Mammary epithelial cell (primary cell): ENCODE measurements at regions of chr3 and their contacts with region 1.

Region 1: GRCh38 chr3:56997675-56998074 is 62.8 kb upstream of the SPATA12 start:
- DNase-seq: no peak
- H3K4me3 ChIP-seq: no peak overlapping the region
- H3K27ac ChIP-seq: no peak overlapping the region
- H3K4me1 ChIP-seq: no peaks in the 10 kb centered on the region
- H3K27me3 ChIP-seq: no peaks in the 10 kb centered on the region
- CTCF ChIP-seq: no peak

Region 2: GRCh38 chr3:56693750-56694149 is 303.9 kb before region 1 on chr3:
- CTCF ChIA-PET with region 1: no interaction called
- dilution Hi-C with region 1: loop called (anchors 10 kb)
- in situ Hi-C with region 1: no loop called
- intact Hi-C with region 1: no loop called
- DNase-seq: no peak
- H3K4me3 ChIP-seq: no peak overlapping the region
- H3K27ac ChIP-seq: no peak overlapping the region
- H3K4me1 ChIP-seq: peaks cover 6% of the 10 kb centered on the region
- H3K27me3 ChIP-seq: no peaks in the 10 kb centered on the region
- CTCF ChIP-seq: no peak

Region 3: DNA sequence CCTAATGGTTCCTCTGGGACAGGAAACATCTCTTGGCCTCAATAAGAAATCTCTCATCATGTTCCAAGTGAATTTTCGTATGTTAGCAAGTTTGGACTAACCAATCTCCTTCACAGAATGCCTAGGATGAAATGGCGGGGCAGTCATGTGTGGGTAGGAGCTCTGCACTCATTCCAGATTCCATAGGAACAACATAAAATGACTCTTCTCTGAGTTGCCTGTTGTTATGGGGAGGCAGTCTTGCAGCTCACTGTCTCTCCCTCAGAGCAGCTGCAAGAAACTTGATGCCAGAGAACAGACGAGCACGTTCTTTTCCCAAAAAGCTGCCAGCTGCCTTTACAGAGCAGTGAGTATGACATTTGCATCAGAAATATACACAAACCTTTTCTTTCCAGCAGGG is 96.9 kb after region 1 on chr3:
- CTCF ChIA-PET with region 1: interaction called, 5 read pairs
- dilution Hi-C with region 1: loop called (anchors 10 kb)
- in situ Hi-C with region 1: loop called in 1 of 2 experiments (anchors 10 kb)
- intact Hi-C with region 1: loop called (anchors 1 kb)
- DNase-seq: no peak
- H3K4me3 ChIP-seq: no peak overlapping the region
- H3K27ac ChIP-seq: no peak overlapping the region
- H3K4me1 ChIP-seq: peaks cover 15% of the 10 kb centered on the region
- H3K27me3 ChIP-seq: no peaks in the 10 kb centered on the region
- CTCF ChIP-seq: no peak

Region 4: GRCh38 chr3:57164657-57165573 is 167.2 kb after region 1 on chr3 and contains the start of gene IL17RD:
- CTCF ChIA-PET with region 1: no interaction called
- dilution Hi-C with region 1: no loop called
- in situ Hi-C with region 1: no loop called
- intact Hi-C with region 1: loop called (anchors 5 kb)
- DNase-seq: peak; percentile 61
- H3K4me3 ChIP-seq: peak within 1 kb of the TSS; percentile 70 to 77 (median 72)
- H3K27ac ChIP-seq: no peak within 1 kb of the TSS
- H3K4me1 ChIP-seq: peaks cover 22% of the 10 kb centered on the region
- H3K27me3 ChIP-seq: no peaks in the 10 kb centered on the region
- CTCF ChIP-seq: no peak
- total RNA-seq, gene IL17RD: 9.8 to 40.2 TPM

Region 5: DNA sequence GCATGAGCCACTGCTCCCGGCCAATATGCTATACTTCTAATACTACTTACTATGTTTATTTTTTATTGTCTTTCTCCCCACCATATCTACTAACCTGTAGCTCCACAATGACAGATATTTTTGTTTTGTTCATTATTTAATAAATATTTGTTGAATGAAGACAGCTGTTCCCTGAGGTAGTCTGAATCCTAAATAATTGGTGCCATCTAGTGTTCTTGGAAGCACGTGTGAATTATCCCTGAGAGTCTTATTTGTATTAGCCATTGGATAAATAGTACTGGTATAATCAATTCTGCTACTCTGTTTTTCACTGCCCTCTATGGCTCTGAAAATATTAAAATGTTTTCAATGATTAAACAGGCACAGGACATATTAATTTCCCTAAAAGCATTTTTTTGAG is 224.2 kb after region 1 on chr3:
- CTCF ChIA-PET with region 1: no interaction called
- dilution Hi-C with region 1: no loop called
- in situ Hi-C with region 1: loop called in 1 of 2 experiments (anchors 10 kb)
- intact Hi-C with region 1: loop called (anchors 1 kb)
- DNase-seq: no peak
- H3K4me3 ChIP-seq: no peak overlapping the region
- H3K27ac ChIP-seq: no peak overlapping the region
- H3K4me1 ChIP-seq: peaks cover 8% of the 10 kb centered on the region
- H3K27me3 ChIP-seq: no peaks in the 10 kb centered on the region
- CTCF ChIP-seq: peak in 1 of 2 donors; percentile 43